Activated T-helper 1 cell treated with anti-CD3 and anti-CD28 coated beads, Interleukin-12 subunit alpha, Interleukin-12 subunit beta, Interleukin-2, Interleukin-4 antibody, amounts not matched to agents 30 ng/mL and 10 ng/mL and 1 ng/mL, durations not matched to agents 14 hours and 24 hours and 36 hours (primary cell): ENCODE measurements at regions of chr10 and their contacts with region 1.

Region 1: DNA sequence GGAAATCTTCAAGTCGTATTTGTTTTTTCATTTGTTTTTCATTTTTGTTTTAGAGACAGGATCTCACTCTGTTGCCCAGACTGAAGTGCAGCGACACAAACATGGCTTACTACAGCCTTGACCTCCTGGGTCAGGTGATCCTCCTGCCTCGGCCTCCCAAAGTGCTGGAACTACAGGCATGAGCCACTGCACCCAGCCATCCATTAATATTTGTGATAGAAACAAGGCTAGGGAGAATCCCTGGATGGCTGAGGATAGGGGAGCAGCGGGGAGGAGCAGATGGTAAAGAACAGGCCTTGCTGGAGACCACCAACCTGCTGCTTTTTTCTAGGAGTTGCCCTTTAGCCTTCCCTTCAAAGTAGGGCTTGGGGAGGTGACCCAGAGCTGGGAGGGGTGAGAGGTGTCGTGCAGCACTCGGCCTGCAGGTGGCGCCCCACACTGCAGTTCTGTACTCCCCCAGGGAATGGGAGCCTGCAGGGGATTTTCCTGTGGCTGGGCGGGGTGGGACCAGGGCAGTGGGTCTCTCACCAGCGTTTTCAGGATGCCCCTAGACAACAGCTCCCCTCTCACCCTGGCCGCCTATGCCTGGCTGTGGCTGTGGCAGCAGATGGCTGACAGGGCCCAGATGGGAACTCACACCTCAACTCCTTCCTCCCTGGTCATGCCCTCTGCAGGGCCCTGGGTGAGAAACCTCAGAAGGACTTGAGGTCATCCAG is 12.6 kb upstream of the CDH23 start:
- DNase-seq: peak; percentile 57
- H3K4me3 Mint-ChIP-seq: no peak overlapping the region
- H3K27ac Mint-ChIP-seq: no peak overlapping the region
- H3K4me1 Mint-ChIP-seq: no peaks in the 10 kb centered on the region
- H3K27me3 Mint-ChIP-seq: peaks cover 20% of the 10 kb centered on the region

Region 2: DNA sequence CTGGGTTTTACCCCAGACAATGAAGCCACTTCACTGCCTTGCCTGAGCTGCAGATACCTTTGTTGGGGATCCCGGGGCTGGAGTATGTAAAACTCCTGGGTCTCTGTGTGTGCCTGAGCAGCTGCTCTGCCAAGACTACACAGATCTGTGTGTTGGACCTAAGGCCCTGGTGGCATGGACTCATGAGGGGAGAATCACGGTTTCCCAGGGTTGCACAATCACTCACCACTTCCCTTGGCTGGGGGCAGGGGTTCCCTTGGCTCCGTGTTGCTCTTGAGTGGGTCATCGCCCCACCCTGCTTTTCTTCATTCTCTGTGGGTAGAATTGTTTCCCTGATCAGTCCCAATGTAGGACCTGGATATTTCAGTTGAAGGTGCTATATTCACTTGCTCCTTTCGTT is 585.0 kb before region 1 on chr10:
- intact Hi-C with region 1: no loop called
- DNase-seq: no peak
- H3K4me3 Mint-ChIP-seq: no peak overlapping the region
- H3K27ac Mint-ChIP-seq: no peak overlapping the region
- H3K4me1 Mint-ChIP-seq: no peaks in the 10 kb centered on the region
- H3K27me3 Mint-ChIP-seq: peaks cover 28% of the 10 kb centered on the region

Region 3: GRCh38 chr10:71323407-71323806 is 60.7 kb before region 1 on chr10:
- intact Hi-C with region 1: no loop called
- DNase-seq: no peak
- H3K4me3 Mint-ChIP-seq: no peak overlapping the region
- H3K27ac Mint-ChIP-seq: no peak overlapping the region
- H3K4me1 Mint-ChIP-seq: no peaks in the 10 kb centered on the region
- H3K27me3 Mint-ChIP-seq: no peaks in the 10 kb centered on the region

Region 4: DNA sequence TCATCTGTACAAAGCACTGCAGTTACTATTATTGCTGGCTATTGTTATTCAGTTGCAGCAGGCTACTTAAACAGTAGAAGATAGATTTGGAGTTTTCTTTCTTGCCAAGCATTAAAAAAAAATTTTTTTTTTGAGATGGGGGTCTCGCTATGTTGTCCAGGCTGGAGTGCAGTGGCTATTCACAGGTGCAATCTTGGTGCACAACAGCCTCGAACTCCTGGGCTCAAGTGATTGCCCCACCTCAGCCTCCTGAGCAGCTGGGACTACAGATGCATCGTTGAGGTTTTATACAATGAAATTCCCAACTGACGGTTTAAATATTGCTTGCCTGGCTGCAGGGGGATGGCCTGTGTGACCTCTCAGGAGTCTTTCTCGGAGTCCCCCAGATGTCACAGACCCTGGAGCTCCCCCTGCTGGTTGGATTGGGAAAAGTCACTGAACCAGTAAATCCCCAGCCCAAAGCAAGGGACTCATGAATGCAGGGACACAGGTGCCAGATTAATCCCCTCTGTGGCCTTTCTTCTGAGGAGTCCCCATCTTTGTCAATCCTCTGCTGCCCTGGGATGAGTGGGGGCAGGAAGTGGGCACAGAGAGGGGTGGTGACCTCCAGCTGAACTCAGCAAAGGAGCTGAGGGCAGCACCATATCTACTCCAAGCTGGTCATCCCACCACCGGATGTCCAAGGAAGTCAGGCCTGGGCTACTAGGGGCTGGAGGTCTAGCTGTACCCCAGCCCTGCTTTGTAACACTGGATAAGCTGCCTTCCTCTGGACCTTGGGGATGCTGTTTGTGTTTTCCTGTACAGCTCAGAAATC is 185.9 kb after region 1 on chr10:
- intact Hi-C with region 1: loop called (anchors 1 kb)
- DNase-seq: peak; percentile 63
- H3K4me3 Mint-ChIP-seq: no peak overlapping the region
- H3K27ac Mint-ChIP-seq: peak overlapping the region; percentile 55
- H3K4me1 Mint-ChIP-seq: no peaks in the 10 kb centered on the region
- H3K27me3 Mint-ChIP-seq: no peaks in the 10 kb centered on the region

Region 5: DNA sequence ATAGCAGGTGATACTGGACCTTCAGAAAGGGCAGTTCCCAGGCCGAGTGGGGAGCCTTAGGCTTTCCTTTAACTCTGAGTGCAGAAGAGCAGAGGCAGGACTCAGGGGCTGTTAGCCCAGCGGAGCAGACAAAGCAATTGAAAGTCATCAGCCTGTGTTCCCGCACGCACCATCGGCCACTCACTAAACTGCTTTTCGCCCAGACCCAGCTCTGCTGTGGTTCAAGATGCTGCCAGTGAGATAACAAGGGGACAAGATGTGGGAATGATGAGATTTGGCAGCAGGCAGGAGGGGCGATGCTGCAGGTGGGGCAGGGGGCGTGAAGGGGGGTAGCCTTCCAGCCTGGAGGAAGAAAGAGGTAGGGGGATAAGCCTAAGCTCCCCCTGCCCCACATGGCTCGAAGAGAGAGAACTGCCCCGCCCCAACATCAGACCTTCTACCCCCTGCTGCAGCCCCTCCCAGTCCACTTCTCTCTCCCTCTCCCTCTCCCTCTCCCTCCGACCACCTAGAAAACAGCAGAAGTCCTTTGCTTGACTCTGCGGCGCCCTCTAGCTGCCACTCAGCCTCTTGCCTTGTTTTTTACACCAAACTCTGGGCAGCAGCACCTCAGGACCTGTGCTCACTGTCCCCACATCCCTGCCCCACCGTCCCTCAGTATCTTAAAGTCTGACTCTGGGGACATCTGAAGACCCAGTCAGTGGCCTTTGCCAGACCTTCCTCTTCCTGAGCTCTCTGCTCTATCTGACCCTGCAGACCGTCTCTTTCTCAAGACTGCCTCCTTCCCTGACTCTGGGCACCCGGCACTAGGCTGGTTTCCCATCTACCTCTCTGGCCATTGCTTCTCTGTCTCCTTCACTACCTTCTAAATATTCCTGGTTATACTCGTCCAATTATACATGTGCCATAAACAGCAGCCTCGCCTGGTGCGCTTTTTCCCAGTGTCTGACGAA is 225.0 kb after region 1 on chr10:
- intact Hi-C with region 1: loop called (anchors 1 kb)
- DNase-seq: peak; percentile 35
- H3K4me3 Mint-ChIP-seq: no peak overlapping the region
- H3K27ac Mint-ChIP-seq: no peak overlapping the region
- H3K4me1 Mint-ChIP-seq: peaks cover 5% of the 10 kb centered on the region
- H3K27me3 Mint-ChIP-seq: peaks cover 4% of the 10 kb centered on the region

Region 6: DNA sequence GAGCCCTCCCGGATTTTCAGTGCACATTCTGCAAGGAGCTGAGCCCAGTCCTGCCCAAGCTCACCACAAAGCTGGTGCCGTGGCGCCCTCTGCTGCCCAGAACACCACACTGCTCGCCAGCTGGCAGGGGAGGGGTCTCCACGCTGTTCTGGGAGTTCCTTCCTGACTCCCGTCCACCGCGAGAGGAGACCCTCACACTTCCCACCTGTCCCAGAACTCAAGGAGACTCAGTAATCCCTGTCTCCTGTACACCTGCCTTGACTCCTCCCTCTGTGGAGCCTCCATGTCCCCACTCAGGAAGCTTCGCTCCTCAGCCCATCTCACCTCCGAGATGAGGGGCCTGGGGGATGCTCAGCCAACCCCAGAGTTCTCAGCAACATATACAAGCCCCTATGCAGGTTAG is 324.2 kb after region 1 on chr10:
- intact Hi-C with region 1: loop called (anchors 1 kb)
- DNase-seq: peak; percentile 43
- H3K4me3 Mint-ChIP-seq: no peak overlapping the region
- H3K27ac Mint-ChIP-seq: no peak overlapping the region
- H3K4me1 Mint-ChIP-seq: peaks cover 27% of the 10 kb centered on the region
- H3K27me3 Mint-ChIP-seq: no peaks in the 10 kb centered on the region

Region 7: DNA sequence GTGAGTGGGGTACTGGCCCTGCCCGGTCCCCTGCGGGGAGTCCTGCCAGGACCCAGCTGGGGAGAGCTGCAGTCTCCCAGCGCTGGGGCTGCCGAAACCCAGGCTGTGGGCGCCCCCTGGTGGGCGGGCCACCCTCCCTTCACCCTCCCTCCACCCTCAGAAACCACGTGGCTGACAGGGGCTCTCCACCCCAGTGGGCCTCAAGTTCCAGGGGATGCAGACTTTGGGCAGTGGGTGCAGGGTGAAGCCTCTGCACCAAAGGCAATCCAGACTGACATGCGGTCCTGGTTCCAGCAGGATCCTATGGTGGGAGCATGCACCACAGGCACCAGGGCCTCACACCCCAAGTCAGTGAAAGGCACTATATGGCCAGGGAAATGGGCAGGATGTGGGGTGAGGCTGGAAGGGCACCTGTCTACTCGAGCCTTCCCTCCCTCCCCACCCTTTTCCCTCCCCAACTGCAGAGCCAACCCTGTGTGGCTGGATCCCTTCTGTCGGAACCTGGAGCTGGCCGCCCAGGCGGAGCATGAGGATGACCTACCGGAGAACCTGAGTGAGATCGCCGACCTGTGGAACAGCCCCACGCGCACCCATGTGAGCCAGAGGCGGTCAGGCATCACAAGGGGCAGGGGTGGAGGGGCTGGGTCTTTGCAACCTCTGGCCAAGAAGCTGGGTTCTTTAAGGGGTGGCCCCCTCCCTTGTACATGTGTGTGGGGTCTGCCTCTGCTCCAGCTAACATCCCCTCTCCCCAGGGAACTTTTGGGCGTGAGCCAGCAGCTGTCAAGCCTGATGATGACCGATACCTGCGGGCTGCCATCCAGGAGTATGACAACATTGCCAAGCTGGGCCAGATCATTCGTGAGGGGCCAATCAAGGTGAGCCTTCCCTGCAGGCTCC is 428.1 kb after region 1 on chr10:
- intact Hi-C with region 1: loop called (anchors 1 kb)
- DNase-seq: peak; percentile 54
- H3K4me3 Mint-ChIP-seq: no peak overlapping the region
- H3K27ac Mint-ChIP-seq: no peak overlapping the region
- H3K4me1 Mint-ChIP-seq: no peaks in the 10 kb centered on the region
- H3K27me3 Mint-ChIP-seq: no peaks in the 10 kb centered on the region